A673 (cell line): ENCODE measurements at regions of chr7 and their contacts with region 1.

Region 1: GRCh38 chr7:111933609-111934008 is 272.6 kb downstream of the DOCK4 start:
- DNase-seq: no peak
- H3K4me3 ChIP-seq: no peak overlapping the region
- H3K27ac ChIP-seq: no peak overlapping the region
- H3K4me1 ChIP-seq: no peaks in the 10 kb centered on the region
- H3K27me3 ChIP-seq: no peaks in the 10 kb centered on the region
- CTCF ChIP-seq: no peak

Region 2: GRCh38 chr7:111409714-111410422 is 523.7 kb before region 1 on chr7:
- CTCF ChIA-PET with region 1: no interaction called
- POLR2A ChIA-PET with region 1: no interaction called
- intact Hi-C with region 1: no loop called
- DNase-seq: no peak
- H3K4me3 ChIP-seq: no peak overlapping the region
- H3K27ac ChIP-seq: no peak overlapping the region
- H3K4me1 ChIP-seq: no peaks in the 10 kb centered on the region
- H3K27me3 ChIP-seq: no peaks in the 10 kb centered on the region
- CTCF ChIP-seq: no peak

Region 3: DNA sequence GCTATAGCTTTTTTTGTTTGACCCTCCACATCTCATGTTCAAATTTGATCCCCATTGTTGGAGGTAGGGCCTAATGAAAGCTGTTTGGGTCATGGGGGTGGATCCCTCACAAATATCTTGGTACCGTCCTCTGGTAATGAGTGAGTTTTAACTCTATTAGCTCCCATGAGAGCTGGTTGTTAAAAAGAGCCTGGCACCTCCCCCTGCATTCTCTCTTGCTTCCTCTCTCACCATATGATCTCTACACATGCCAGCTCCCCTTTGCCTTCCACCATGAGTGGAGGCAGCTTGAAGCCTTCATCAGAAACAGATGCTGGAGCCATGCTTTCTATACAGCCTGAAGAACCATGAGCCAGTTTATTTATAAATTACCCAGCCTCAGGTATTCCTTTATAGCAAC is 328.4 kb before region 1 on chr7:
- CTCF ChIA-PET with region 1: no interaction called
- POLR2A ChIA-PET with region 1: no interaction called
- intact Hi-C with region 1: no loop called
- DNase-seq: peak; percentile 62
- H3K4me3 ChIP-seq: no peak overlapping the region
- H3K27ac ChIP-seq: no peak overlapping the region
- H3K4me1 ChIP-seq: peaks cover 7% of the 10 kb centered on the region
- H3K27me3 ChIP-seq: no peaks in the 10 kb centered on the region
- CTCF ChIP-seq: no peak

Region 4: GRCh38 chr7:111953611-111954010 is 20.0 kb after region 1 on chr7:
- CTCF ChIA-PET with region 1: no interaction called
- POLR2A ChIA-PET with region 1: interaction called, 18 read pairs
- intact Hi-C with region 1: no loop called
- DNase-seq: peak; percentile 69
- H3K4me3 ChIP-seq: no peak overlapping the region
- H3K27ac ChIP-seq: no peak overlapping the region
- H3K4me1 ChIP-seq: no peaks in the 10 kb centered on the region
- H3K27me3 ChIP-seq: no peaks in the 10 kb centered on the region
- CTCF ChIP-seq: peak; percentile 47

Region 5: DNA sequence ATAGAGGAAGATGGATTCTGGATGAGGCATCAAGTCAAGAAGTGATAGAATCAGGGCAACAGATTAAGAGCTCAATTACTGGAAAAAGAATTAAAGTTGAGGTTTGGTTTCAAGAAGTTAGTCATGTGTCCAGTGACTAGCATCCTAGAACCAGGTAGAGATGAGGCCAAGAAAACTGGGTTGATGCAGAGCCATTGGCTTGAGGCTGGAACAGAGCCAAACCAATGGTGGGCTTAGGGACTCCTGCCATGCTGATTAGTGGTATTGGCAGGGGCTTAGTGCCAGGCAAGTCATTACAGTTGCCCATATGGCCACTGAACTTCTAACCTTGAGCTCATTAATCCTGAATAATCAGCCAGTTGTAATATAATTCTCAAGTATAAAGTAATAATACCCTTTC is 291.4 kb after region 1 on chr7:
- CTCF ChIA-PET with region 1: no interaction called
- POLR2A ChIA-PET with region 1: no interaction called
- intact Hi-C with region 1: no loop called
- DNase-seq: no peak
- H3K4me3 ChIP-seq: no peak overlapping the region
- H3K27ac ChIP-seq: no peak overlapping the region
- H3K4me1 ChIP-seq: no peaks in the 10 kb centered on the region
- H3K27me3 ChIP-seq: no peaks in the 10 kb centered on the region
- CTCF ChIP-seq: no peak